Heart right ventricle (tissue), 16 donors: ENCODE measurements at regions of chr3 and their contacts with region 1.

Region 1: GRCh38 chr3:49165771-49166751 is at the start of gene CCDC71:
- DNase-seq: peak; percentile 83 to 84
- ATAC-seq: peak; percentile 59 to 83 (median 73)
- H3K4me3 ChIP-seq: peak within 1 kb of the TSS; percentile 43 to 94 (median 84)
- H3K27ac ChIP-seq: peak within 1 kb of the TSS; percentile 74 to 97 (median 94)
- H3K4me1 ChIP-seq: peaks cover 3 to 34% (median 27%) of the 10 kb centered on the region in 9 donors
- H3K27me3 ChIP-seq: no peaks in the 10 kb centered on the region
- CTCF ChIP-seq: no peak
- total RNA-seq, gene CCDC71: 10.4 to 16.9 (median 12.3) TPM

Region 2: GRCh38 chr3:48595526-48596121 is 570.4 kb before region 1 on chr3:
- intact Hi-C with region 1: no loop called
- DNase-seq: peak in 1 of 2 donors; percentile 62
- ATAC-seq: peak in 2 of 8 donors; percentile 3 to 9
- H3K4me3 ChIP-seq: peak overlapping the region in 6 of 10 donors; percentile 41 to 55 (median 46)
- H3K27ac ChIP-seq: peak overlapping the region in 6 of 10 donors; percentile 80 to 93 (median 86)
- H3K4me1 ChIP-seq: peaks cover 36 to 67% (median 62%) of the 10 kb centered on the region in 9 donors
- H3K27me3 ChIP-seq: peaks cover 0 to 28% (median 0%) of the 10 kb centered on the region in 7 donors
- CTCF ChIP-seq: no peak

Region 3: GRCh38 chr3:49133226-49133951 is 32.7 kb before region 1 on chr3:
- intact Hi-C with region 1: loop called in 3 of 10 experiments (anchors 5 kb)
- DNase-seq: peak; percentile 88 to 93
- ATAC-seq: peak; percentile 79 to 93 (median 86)
- H3K4me3 ChIP-seq: peak overlapping the region; percentile 61 to 97 (median 78)
- H3K27ac ChIP-seq: peak overlapping the region; percentile 85 to 99 (median 94)
- H3K4me1 ChIP-seq: peaks cover 15 to 46% (median 35%) of the 10 kb centered on the region in 9 donors
- H3K27me3 ChIP-seq: no peaks in the 10 kb centered on the region
- CTCF ChIP-seq: peak in 1 of 9 donors; percentile 0

Region 4: DNA sequence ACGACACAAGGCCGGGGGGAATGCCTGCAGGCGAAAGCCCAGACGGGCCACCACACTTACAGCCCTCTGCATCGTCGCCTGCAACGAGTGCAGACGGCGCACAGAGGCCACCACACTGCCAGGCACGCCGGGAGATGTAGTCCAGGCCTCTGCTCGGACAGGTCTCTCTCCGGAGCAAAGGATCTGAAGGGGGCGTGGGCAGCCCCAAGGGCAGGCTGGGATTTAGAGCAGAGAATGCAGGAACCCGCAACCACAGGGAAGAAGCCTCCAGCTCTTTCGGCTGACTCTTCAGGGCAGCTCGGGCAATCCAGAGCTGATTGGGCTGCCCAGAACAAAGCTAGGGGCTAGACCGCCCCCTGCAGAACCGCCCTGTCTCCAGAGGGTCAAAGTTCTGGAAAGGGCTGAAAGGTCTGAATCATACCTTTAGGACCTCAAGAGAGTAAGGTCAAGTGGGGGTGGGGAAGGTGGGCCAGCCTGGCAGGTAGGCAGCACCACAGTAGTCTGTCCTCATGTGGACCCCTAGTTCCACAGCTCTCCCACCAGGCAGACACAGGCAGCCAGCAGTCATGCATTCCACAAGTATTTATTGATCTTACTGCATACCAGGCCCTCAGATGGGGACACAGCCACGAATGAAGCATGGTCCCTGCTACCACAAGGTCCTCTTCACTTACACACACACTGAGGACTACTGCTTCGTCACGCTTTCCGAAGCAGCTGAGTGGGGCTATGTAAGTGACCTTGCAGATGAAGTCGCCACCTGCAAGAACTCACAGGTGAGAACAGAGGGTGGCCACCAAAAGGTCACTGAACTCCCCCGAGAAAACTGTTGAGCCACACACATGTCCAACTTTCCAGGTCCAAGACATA is 256.6 kb after region 1 on chr3 and contains the start of gene AMT:
- intact Hi-C with region 1: loop called in 1 of 10 experiments (anchors 10 kb)
- DNase-seq: peak; percentile 60
- ATAC-seq: peak; percentile 70 to 89 (median 82)
- H3K4me3 ChIP-seq: peak within 1 kb of the TSS; percentile 19 to 60 (median 51)
- H3K27ac ChIP-seq: peak within 1 kb of the TSS in 9 of 10 donors; percentile 10 to 75 (median 60)
- H3K4me1 ChIP-seq: peaks cover 0 to 29% (median 6%) of the 10 kb centered on the region in 9 donors
- H3K27me3 ChIP-seq: no peaks in the 10 kb centered on the region
- CTCF ChIP-seq: no peak
- total RNA-seq, gene AMT: 21.3 to 40.9 (median 34.3) TPM